ENCODE measurements at regions of chr22 and their contacts with region 1.

Region 1: DNA sequence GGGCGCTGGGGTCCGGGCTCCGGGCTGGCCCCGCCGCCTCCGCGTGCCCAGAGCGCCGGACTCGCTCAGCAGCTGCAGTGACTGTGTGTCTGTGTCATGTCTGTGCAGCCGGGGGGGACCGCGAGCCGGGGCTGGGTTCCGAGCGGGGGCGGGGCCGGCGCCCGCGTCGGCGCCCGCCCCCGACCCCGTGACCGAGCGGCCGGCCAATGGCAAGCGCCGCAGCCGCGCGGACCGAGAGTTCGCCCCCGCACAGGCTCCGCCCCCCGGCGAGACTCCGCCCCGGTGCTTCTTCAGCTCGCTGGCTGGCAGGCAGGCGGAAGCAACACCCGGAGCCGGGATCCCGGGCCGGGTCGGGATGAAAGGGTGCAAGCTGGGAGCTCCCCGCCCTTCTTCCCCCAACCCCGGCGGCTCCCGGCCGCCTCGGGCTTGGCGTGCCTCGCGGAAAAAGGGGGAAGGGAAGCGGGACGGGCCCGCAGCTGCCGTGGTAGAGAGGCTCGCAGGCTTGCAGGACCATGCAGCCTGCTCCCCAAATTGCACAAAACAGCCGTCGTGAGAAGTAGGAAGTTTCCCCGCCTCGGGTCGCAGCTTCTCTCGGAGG is 750 bp upstream of the LARGE1 start:
- DNase-seq: peak; percentile 97
- H3K4me3 ChIP-seq: peak overlapping the region; percentile 74
- H3K27ac ChIP-seq: no peak overlapping the region
- H3K4me1 ChIP-seq: peaks cover 41% of the 10 kb centered on the region
- CTCF ChIP-seq: no peak

Region 2: DNA sequence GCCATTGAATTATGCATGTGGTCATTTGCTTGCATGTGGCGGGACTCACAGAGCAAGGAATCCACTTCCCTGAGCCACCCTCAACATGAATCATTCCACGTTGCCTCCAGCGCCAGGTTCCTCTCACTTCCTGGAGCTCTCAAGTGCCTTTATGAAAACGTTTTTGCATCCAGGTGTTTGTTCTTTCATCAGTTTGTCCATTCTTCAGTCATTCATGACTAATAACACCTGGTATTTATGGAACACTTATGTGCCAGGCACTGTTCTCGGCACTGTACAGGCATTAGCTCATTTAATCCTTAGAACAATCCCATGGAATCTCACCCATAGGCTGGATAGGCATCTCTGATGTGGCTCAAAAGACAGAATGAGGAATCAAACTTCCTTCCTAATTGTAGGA is 606.7 kb before region 1 on chr22:
- CTCF ChIA-PET with region 1: no interaction called
- POLR2A ChIA-PET with region 1: no interaction called
- intact Hi-C with region 1: loop called (anchors 5 kb)
- DNase-seq: no peak
- H3K4me3 ChIP-seq: no peak overlapping the region
- H3K27ac ChIP-seq: no peak overlapping the region
- H3K4me1 ChIP-seq: peaks cover 31% of the 10 kb centered on the region
- CTCF ChIP-seq: no peak

Region 3: GRCh38 chr22:33519071-33519973 is 401.7 kb before region 1 on chr22:
- CTCF ChIA-PET with region 1: interaction called, 3 read pairs
- POLR2A ChIA-PET with region 1: interaction called, 3 read pairs
- intact Hi-C with region 1: loop called (anchors 1 kb)
- DNase-seq: peak; percentile 84
- H3K4me3 ChIP-seq: no peak overlapping the region
- H3K27ac ChIP-seq: peak overlapping the region; percentile 57
- H3K4me1 ChIP-seq: peaks cover 40% of the 10 kb centered on the region
- CTCF ChIP-seq: peak; percentile 90

Region 4: GRCh38 chr22:33579448-33580093 is 341.5 kb before region 1 on chr22:
- CTCF ChIA-PET with region 1: no interaction called
- POLR2A ChIA-PET with region 1: no interaction called
- intact Hi-C with region 1: loop called (anchors 2 kb)
- DNase-seq: peak; percentile 80
- H3K4me3 ChIP-seq: no peak overlapping the region
- H3K27ac ChIP-seq: no peak overlapping the region
- H3K4me1 ChIP-seq: peaks cover 52% of the 10 kb centered on the region
- CTCF ChIP-seq: peak; percentile 98

Region 5: DNA sequence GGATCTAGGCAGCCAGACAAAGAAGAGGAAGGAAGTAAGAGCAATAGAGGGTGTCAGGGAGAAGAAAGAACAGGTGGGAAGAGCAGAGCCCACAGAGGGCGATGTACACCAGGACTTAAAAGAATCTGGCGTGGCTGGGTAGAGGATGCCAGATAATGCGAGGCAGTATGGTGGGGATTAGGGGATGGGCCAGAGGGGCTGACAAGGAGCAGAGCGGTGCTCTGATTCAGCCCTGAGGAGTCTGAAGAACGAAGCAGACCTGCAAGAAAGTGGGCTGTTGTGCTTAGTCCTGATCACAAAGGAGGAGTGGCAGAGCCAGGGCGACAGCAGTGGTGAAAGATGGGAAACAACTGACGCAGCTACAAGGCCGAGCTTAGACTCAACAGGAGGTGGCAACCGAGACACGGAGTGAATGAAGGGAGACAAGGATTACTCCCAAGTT is 164.5 kb before region 1 on chr22:
- CTCF ChIA-PET with region 1: no interaction called
- POLR2A ChIA-PET with region 1: interaction called, 7 read pairs
- intact Hi-C with region 1: loop called (anchors 5 kb)
- DNase-seq: peak; percentile 47
- H3K4me3 ChIP-seq: no peak overlapping the region
- H3K27ac ChIP-seq: no peak overlapping the region
- H3K4me1 ChIP-seq: peaks cover 7% of the 10 kb centered on the region
- CTCF ChIP-seq: peak; percentile 59

Region 6: GRCh38 chr22:33896575-33897447 is 24.2 kb before region 1 on chr22:
- CTCF ChIA-PET with region 1: no interaction called
- POLR2A ChIA-PET with region 1: no interaction called
- intact Hi-C with region 1: loop called (anchors 2 kb)
- DNase-seq: peak; percentile 56
- H3K4me3 ChIP-seq: peak overlapping the region; percentile 30
- H3K27ac ChIP-seq: peak overlapping the region; percentile 72
- H3K4me1 ChIP-seq: peaks cover 45% of the 10 kb centered on the region
- CTCF ChIP-seq: no peak

Region 7: DNA sequence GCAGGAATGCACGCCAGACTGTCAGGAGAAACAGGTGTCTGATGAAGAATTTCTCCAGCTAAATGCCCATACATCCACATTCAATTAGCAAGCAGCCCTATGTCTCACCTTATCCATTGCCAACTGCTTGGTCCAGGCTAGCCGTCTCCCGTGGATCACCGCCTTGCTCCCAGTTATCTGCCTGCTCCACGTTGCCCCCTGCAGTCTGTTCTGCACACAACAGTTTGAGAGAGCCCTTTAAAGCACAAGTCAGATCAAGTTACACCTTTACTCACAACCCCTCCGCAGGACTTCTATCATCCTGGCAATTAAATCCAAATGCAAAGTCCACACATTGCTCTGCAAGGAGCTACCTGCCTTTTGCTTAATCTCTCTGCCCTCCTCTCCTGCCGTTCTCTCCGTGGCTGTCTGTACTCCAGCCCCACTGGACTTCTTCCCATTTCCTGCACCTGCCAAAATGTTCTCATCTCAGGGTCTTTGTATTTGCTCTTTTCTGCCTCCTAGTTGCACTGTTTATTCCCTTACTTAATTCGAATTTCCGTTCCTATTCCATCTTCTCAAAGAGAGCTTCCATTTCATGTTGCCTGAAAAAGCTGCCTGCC is 184.5 kb after region 1 on chr22:
- CTCF ChIA-PET with region 1: no interaction called
- POLR2A ChIA-PET with region 1: no interaction called
- intact Hi-C with region 1: loop called (anchors 2 kb)
- DNase-seq: peak; percentile 18
- H3K4me3 ChIP-seq: no peak overlapping the region
- H3K27ac ChIP-seq: no peak overlapping the region
- H3K4me1 ChIP-seq: no peaks in the 10 kb centered on the region
- CTCF ChIP-seq: peak; percentile 71

Measured in OCI-LY7 (cell line).